ENCODE measurements at regions of chr2 and their contacts with region 1.

Region 1: GRCh38 chr2:39938035-39938835 is 159.2 kb upstream of the THUMPD2 start:
- DNase-seq: no peak
- H3K4me3 ChIP-seq: no peak overlapping the region
- H3K27ac ChIP-seq: no peak overlapping the region
- H3K4me1 ChIP-seq: no peaks in the 10 kb centered on the region
- H3K27me3 ChIP-seq: no peaks in the 10 kb centered on the region
- CTCF ChIP-seq: no peak
- POLR2A ChIP-seq: no peak

Region 2: GRCh38 chr2:39156107-39156506 is 782.1 kb before region 1 on chr2:
- intact Hi-C with region 1: loop called (anchors 10 kb)
- DNase-seq: no peak
- H3K4me3 ChIP-seq: no peak overlapping the region
- H3K27ac ChIP-seq: no peak overlapping the region
- H3K4me1 ChIP-seq: no peaks in the 10 kb centered on the region
- H3K27me3 ChIP-seq: no peaks in the 10 kb centered on the region
- CTCF ChIP-seq: no peak
- POLR2A ChIP-seq: no peak

Measured in vagina (tissue), 2 donors.